HCT116 (cell line): ENCODE measurements at regions of chr9 and their contacts with region 1.

Region 1: DNA sequence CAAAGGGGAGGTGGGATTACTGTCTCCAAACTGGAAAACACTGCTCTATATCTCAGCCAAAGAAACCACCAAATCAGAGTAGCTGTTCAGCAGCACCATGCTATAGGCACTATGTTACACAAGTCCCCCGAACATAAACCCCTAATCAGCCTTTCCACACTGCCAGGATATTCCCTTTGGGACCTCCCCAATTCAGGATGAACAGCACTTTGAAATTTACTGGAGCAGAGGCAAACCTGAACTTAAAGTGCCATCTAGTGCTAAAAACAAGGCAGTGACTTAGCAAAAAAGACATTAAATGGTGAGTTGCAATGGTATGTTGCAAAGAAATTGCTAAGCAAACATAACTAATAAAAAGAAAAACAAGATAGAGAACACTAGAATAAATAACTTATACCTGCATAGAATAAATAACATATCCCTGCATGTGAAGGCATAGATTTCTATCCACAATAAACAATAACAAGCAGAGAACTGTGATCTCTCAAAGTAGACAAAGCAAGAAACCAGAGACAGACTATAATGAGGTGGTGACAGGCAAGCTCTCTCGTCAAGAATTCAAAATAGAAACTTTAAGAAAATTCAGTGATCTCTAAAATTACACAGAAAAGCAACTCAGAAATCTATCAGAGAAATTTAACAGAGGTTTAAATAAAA is 584.4 kb upstream of the ACO1 start:
- DNase-seq: peak; percentile 19
- ATAC-seq: peak; percentile 32; the same call in 1 of the 2 replicates
- H3K4me3 ChIP-seq: no peak overlapping the region
- H3K27ac ChIP-seq: no peak overlapping the region
- H3K4me1 ChIP-seq: no peaks in the 10 kb centered on the region
- H3K27me3 ChIP-seq: no peaks in the 10 kb centered on the region
- CTCF ChIP-seq: peak; percentile 29 to 61 (median 46); a peak in 5 of 6 replicates
- POLR2A ChIP-seq: no peak
- RAD21 ChIP-seq: peak; percentile 76

Region 2: GRCh38 chr9:29830821-29831220 is 1969.3 kb before region 1 on chr9:
- CTCF ChIA-PET with region 1: no interaction called
- POLR2A ChIA-PET with region 1: no interaction called
- RAD21 ChIA-PET with region 1: no interaction called
- intact Hi-C with region 1: loop called (anchors 2 kb)
- DNase-seq: peak; percentile 24
- ATAC-seq: peak; percentile 59
- H3K4me3 ChIP-seq: no peak overlapping the region
- H3K27ac ChIP-seq: no peak overlapping the region
- H3K4me1 ChIP-seq: no peaks in the 10 kb centered on the region
- H3K27me3 ChIP-seq: no peaks in the 10 kb centered on the region
- CTCF ChIP-seq: peak; percentile 27 to 66 (median 45); a peak in 5 of 6 replicates
- POLR2A ChIP-seq: no peak
- RAD21 ChIP-seq: peak; percentile 66

Region 3: GRCh38 chr9:31119882-31120454 is 680.1 kb before region 1 on chr9:
- CTCF ChIA-PET with region 1: no interaction called
- POLR2A ChIA-PET with region 1: no interaction called
- RAD21 ChIA-PET with region 1: no interaction called
- intact Hi-C with region 1: loop called (anchors 2 kb)
- DNase-seq: peak; percentile 6
- ATAC-seq: peak; percentile 77
- H3K4me3 ChIP-seq: no peak overlapping the region
- H3K27ac ChIP-seq: no peak overlapping the region
- H3K4me1 ChIP-seq: no peaks in the 10 kb centered on the region
- H3K27me3 ChIP-seq: no peaks in the 10 kb centered on the region
- CTCF ChIP-seq: peak; percentile 24 to 49 (median 34); a peak in 5 of 6 replicates
- POLR2A ChIP-seq: no peak
- RAD21 ChIP-seq: peak; percentile 59

Region 4: GRCh38 chr9:31854187-31854586 is 54.1 kb after region 1 on chr9:
- CTCF ChIA-PET with region 1: no interaction called
- POLR2A ChIA-PET with region 1: no interaction called
- RAD21 ChIA-PET with region 1: no interaction called
- intact Hi-C with region 1: loop called (anchors 10 kb)
- DNase-seq: no peak
- ATAC-seq: no peak
- H3K4me3 ChIP-seq: no peak overlapping the region
- H3K27ac ChIP-seq: no peak overlapping the region
- H3K4me1 ChIP-seq: peaks cover 0 to 6% of the 10 kb centered on the region in 2 experiments; a peak in 1 of 4 replicates
- H3K27me3 ChIP-seq: no peaks in the 10 kb centered on the region
- CTCF ChIP-seq: no peak
- POLR2A ChIP-seq: no peak
- RAD21 ChIP-seq: no peak